ENCODE measurements at regions of chr1 and their contacts with region 1.

Region 1: DNA sequence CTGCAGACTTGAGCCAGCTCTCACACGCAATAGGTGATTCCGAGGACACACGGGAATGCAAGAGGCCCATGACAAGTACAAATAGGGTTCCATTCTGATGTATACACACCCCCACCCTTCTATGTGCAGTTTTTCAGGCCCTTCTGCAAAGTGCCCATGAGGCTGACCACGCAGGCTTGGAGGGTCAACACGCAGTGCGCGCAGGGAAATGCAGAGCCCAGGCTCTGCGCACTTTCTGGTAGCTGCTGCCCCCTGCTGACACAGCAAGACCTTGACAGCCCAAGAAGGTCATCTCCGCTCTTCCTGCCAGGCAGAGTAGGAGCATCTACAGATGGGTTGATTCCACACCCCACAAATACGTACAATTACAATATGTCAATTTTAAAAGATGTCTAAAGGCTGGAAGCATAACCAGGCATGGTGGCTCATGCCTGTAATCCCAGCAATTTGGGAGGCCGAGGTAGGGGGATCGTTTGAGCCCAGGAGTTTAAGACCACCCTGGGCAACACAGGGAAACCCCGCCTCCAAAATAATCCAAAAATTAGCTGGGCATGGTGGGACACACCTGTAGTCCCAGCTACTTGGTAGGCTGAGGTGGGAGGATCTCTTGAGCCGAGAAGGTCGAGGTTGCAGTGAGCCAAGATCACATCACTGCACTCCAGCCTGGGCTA is 18.5 kb downstream of the SH3BP5L start:
- DNase-seq: peak; percentile 63 to 70 (median 64)
- ATAC-seq: peak; percentile 79
- H3K4me3 ChIP-seq: no peak overlapping the region
- H3K27ac ChIP-seq: no peak overlapping the region
- H3K4me1 ChIP-seq: peaks cover 31% of the 10 kb centered on the region
- H3K27me3 ChIP-seq: no peaks in the 10 kb centered on the region
- CTCF ChIP-seq: peak; percentile 54 to 88 (median 84)
- POLR2A ChIP-seq: no peak

Region 2: DNA sequence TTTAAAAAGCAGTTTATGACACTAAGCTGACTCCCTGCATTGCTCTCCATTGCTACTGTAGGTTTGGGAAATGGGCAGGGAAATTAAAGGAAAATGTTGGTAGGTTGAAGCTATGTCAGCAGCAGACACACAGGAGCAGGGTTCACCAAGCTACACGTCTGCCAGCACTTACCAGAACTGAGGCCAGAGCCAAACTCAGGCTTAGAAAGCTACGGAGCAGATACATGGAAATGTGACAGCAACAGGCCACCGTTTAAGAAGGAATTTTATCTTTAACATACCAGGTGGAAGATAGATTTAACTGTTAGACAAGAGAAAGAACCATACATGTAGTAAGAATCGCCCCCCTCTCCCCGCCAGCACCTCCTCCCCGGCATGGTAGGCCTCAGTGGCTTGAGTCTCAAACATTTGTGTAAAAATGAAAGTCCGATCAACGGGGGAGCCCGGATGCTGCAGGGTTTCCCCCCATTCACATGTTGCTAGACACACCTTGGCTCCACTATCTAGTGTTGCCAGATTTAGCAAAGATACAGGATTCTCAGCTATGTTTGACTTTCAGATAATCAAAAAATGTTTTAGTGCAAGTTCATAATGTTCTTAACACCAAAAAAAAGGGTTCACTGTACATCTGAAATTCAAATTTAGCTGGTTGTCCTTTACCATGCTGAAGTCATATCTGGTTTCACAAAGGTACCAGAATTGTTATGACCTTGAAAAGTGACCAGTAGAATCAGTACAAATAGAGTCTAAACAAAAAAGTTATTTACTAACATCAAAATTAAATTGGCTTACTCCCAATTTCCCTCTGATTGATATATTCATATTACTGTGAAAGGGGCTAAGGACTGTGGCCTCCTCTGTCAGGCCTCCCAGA is 179.0 kb before region 1 on chr1:
- intact Hi-C with region 1: loop called (anchors 5 kb)
- DNase-seq: no peak
- ATAC-seq: no peak
- H3K4me3 ChIP-seq: no peak overlapping the region
- H3K27ac ChIP-seq: no peak overlapping the region
- H3K4me1 ChIP-seq: no peaks in the 10 kb centered on the region
- H3K27me3 ChIP-seq: no peaks in the 10 kb centered on the region
- CTCF ChIP-seq: no peak
- POLR2A ChIP-seq: no peak

Region 3: GRCh38 chr1:248841702-248842395 is 34.6 kb after region 1 on chr1:
- intact Hi-C with region 1: no loop called
- DNase-seq: peak in 3 of 4 donors; percentile 21 to 44 (median 43)
- ATAC-seq: no peak
- H3K4me3 ChIP-seq: no peak overlapping the region
- H3K27ac ChIP-seq: no peak overlapping the region
- H3K4me1 ChIP-seq: peaks cover 50% of the 10 kb centered on the region
- H3K27me3 ChIP-seq: no peaks in the 10 kb centered on the region
- CTCF ChIP-seq: peak in 6 of 7 experiments; percentile 13 to 41 (median 34)
- POLR2A ChIP-seq: no peak

Measured in body of pancreas (tissue), 4 donors.